Keratinocyte (primary cell): ENCODE measurements at regions of chr3 and their contacts with region 1.

Region 1: GRCh38 chr3:19284974-19285373 is 136.7 kb downstream of the KCNH8 start:
- DNase-seq: no peak
- H3K4me3 ChIP-seq: no peak overlapping the region
- H3K27ac ChIP-seq: no peak overlapping the region
- H3K4me1 ChIP-seq: no peaks in the 10 kb centered on the region
- H3K27me3 ChIP-seq: no peaks in the 10 kb centered on the region
- CTCF ChIP-seq: no peak

Region 2: DNA sequence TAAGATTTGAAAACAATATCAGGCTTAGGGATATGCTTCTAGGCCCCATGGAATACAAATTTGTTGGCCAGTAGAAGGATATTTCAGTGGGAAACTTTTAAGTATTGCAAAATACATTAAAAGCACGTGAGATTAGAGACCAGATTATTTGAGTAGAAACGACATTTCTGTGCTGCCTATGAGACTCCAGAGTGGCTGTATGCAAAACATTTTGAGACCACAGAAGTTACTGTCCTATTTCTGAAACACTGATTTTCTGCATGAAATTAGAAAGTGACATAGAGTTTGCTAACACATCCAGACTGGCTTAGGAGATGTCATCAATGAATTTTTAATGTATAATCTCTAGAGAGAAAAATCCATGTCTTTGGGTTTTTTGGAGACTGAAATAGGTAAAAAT is 36.8 kb before region 1 on chr3:
- dilution Hi-C with region 1: loop called (anchors 5 kb)
- DNase-seq: no peak
- H3K4me3 ChIP-seq: no peak overlapping the region
- H3K27ac ChIP-seq: no peak overlapping the region
- H3K4me1 ChIP-seq: no peaks in the 10 kb centered on the region
- H3K27me3 ChIP-seq: no peaks in the 10 kb centered on the region
- CTCF ChIP-seq: no peak